Aorta (tissue), 5 donors: ENCODE measurements at regions of chr20 and their contacts with region 1.

Region 1: DNA sequence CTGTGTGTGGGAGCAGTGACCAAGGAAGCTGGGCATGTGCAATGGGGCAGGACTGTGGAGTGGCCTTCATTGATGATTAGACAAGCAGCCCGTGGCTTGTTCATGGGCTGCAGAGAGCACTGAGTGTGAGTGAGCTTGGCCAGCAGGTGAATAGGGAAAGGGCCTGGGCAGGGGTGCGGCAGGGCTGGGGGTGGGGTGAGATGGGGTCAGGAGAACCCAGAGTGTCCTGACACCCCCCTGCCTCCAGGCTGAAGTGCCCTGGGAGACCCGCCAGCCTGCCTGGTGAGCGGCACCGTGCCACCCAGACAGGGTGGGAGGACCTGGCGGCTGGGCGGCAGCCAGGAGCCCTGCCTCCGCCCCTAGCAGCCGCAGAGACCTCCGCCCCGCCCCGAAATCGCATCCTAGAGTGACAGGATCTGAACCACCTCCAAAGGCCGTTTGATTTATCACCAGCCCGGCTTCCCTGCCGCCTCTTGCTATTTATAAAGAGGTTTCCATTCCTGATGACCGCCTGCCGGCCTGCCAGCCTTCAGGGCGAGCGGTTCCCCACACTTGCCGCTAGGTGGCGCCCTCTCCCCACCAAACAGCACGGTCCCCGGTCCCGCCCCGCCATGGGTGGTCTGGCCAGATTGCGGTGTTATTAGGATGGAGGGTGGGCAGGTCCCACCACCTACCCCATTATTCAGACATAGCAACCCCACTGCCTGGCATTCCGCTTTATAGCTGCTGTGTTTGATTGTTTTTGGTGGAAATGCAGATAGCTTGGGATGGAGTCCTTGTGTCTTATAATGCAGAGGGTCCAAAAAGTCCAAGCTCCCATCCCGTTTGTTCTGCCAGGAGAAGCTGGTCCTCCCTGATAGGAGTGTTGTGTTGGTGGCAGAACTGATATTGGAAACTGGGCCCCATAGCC is 3.5 kb downstream of the MYLK2 start:
- DNase-seq: peak; percentile 87 to 96
- ATAC-seq: peak; percentile 93
- H3K4me3 ChIP-seq: no peak overlapping the region
- H3K27ac ChIP-seq: peak overlapping the region in 1 of 2 donors; percentile 62
- H3K4me1 ChIP-seq: no peaks in the 10 kb centered on the region
- H3K27me3 ChIP-seq: no peaks in the 10 kb centered on the region

Region 2: DNA sequence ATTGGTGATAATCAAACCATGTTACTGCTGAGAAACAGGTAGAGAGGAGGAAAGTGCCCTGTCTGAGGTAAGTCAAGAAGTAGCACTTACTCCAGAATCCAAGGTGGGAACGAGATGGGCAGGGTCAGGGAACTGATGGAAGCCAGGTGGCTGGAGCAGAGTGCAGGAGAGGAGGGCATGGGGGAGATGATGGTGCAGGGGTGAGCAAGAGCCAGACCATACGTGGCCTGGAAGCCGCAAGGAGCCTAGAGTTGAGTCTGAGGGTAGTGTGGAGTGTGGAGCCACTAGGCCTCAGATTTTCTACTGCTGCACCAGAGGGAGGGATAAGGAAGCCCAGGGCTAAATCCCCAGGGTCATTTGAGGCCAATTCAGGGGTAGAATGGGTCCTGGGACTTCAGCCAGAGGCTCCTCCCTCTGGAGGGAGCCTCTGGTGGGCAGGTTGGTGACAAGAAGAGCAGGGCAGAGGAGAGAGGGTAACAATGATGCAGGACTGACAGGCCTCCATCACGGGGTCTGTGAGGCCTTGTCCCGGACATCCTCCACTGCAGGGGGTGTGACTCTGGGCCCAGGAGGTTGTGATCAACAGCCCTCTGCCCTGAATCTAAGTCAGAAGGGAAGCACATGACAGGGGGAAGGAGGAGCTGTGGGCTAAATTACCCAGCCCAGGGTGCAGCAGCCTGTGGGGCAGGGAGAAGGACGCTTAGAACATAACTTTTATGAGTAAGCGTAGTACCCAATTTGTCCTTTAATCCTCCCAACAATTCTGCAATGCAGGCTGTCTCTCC is 156.2 kb before region 1 on chr20:
- intact Hi-C with region 1: no loop called
- DNase-seq: peak in 1 of 2 donors; percentile 86
- ATAC-seq: peak; percentile 19
- H3K4me3 ChIP-seq: no peak overlapping the region
- H3K27ac ChIP-seq: peak overlapping the region in 1 of 2 donors; percentile 10
- H3K4me1 ChIP-seq: peaks cover 3 to 10% of the 10 kb centered on the region in 2 donors
- H3K27me3 ChIP-seq: no peaks in the 10 kb centered on the region

Region 3: DNA sequence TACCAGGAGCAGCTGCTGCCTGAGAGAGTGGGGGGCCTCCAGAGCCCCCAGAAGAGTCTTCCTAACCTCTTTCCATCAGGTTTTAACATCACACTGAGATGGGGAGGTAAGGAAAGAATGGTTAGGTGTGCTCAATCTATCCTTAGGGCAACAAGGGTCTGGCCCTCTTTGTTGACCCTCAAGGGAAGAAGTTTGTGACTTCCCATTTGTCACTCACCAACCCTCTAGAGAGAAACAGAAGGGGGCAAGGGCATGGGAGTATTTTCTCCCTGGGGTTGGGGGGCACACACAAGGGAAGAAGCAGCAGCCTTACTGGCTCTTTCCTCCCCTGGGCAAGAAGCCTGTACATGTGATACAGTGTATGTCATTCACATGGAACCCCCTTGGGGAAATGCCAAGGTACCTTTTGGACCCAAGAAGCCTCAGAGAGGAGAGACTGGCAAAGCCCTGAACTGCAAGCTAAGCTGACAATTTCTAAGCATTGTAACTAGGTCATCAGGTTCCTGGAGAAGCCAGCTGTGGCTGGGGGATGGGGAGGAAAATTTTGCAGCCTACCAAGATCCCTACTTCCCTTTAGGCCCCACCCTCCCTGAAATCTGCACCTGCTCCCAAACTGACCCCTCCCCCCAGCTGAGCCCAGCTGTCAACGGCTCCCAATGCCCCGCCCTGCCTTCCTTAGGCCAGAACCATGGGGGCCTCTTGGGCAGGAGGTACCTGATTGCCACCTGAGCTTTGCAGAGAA is 114.5 kb before region 1 on chr20:
- intact Hi-C with region 1: no loop called
- DNase-seq: peak in 1 of 2 donors; percentile 73
- ATAC-seq: no peak
- H3K4me3 ChIP-seq: no peak overlapping the region
- H3K27ac ChIP-seq: peak overlapping the region in 1 of 2 donors; percentile 46
- H3K4me1 ChIP-seq: peaks cover 2 to 25% of the 10 kb centered on the region in 2 donors
- H3K27me3 ChIP-seq: no peaks in the 10 kb centered on the region

Region 4: DNA sequence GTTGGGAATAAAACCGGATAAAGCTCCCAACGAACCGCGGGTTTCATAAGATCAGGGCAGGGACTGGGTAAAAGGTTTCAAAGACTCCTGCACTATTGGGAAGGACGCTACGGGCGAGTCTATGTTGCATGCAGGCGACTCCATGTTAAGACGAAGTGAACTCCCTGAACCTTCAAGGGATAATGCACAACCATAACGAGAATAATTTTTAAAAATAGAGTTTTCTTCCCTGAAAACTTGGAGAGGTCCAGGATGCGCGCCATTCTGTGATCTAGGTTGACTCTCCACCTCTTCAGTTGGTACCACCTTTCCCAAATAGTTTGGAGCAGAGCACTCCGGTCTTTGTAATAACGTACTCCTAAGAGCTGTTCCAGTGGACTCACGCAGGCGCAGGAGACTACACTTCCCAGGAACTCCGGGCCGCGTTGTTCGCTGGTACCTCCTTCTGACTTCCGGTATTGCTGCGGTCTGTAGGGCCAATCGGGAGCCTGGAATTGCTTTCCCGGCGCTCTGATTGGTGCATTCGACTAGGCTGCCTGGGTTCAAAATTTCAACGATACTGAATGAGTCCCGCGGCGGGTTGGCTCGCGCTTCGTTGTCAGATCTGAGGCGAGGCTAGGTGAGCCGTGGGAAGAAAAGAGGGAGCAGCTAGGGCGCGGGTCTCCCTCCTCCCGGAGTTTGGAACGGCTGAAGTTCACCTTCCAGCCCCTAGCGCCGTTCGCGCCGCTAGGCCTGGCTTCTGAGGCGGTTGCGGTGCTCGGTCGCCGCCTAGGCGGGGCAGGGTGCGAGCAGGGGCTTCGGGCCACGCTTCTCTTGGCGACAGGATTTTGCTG is 83.7 kb before region 1 on chr20 and contains the start of gene TPX2:
- intact Hi-C with region 1: loop called (anchors 5 to 10 kb)
- DNase-seq: peak; percentile 96 to 97
- ATAC-seq: peak; percentile 99
- H3K4me3 ChIP-seq: peak within 1 kb of the TSS; percentile 57 to 86
- H3K27ac ChIP-seq: peak within 1 kb of the TSS; percentile 34 to 48
- H3K4me1 ChIP-seq: no peaks in the 10 kb centered on the region
- H3K27me3 ChIP-seq: no peaks in the 10 kb centered on the region
- total RNA-seq, gene TPX2: 0.75 to 2.1 TPM

Region 5: GRCh38 chr20:31788578-31788977 is 34.1 kb before region 1 on chr20:
- intact Hi-C with region 1: no loop called
- DNase-seq: no peak
- ATAC-seq: no peak
- H3K4me3 ChIP-seq: no peak overlapping the region
- H3K27ac ChIP-seq: no peak overlapping the region
- H3K4me1 ChIP-seq: no peaks in the 10 kb centered on the region
- H3K27me3 ChIP-seq: no peaks in the 10 kb centered on the region

Region 6: DNA sequence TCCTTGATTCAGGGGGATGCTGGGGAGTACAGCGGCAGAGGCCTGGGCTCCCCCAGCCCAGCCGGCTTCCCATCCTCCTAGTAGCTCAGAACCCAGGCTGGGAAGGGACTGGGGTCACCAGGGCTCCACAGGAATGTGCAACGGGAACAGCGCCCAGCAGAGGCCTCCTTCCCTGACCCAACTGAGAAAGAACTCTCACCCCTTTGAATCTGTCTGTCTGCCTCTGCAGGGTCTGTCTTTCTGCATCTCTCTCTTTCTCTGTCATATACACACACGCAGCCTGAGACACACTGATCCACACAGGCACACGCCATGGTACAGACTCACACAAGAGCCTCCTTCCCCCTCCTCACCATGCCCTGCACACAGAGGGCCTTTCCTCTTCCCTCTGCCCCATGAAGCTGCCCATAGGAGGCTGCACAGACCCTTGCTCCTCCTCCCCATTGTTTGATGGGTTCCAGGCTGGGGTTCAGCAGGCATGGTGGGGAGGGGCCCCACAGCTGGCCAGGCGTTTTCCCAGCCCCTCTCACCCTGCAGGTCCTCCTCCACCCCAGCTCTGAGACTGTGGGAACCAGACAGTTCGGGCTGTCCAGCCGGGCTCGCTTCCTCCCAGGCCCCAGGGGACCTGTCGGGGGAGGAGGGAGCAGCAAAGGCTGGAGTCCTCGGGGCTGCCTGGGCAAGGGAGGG is 19.9 kb after region 1 on chr20:
- intact Hi-C with region 1: loop called (anchors 2 kb)
- DNase-seq: peak; percentile 88 to 89
- ATAC-seq: peak; percentile 56
- H3K4me3 ChIP-seq: peak overlapping the region in 1 of 2 donors; percentile 21
- H3K27ac ChIP-seq: peak overlapping the region; percentile 71 to 82
- H3K4me1 ChIP-seq: no peaks in the 10 kb centered on the region
- H3K27me3 ChIP-seq: no peaks in the 10 kb centered on the region

Region 7: DNA sequence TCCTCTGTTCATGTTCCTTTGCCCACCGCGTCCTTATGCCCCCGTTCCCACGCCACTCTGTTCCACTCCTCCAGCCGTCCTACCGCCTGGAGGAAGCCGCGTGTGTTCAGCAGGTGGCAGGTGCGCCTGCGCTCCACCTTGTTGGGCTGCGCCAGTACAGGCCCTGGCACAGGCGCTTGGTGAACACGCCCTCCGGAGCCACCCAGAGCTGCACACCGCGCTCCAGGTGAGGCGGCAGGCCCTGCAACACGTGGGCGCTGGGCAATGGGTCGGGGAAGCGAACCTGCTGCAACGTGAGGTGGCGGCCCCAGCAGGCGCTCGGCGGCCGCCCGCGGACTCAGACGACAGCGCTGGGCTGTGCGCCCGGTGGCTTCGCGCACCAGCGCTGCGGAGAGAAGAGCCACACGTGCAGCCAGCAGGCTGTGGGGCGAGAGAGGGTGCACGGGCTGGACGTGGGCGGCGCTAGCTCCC is 26.8 kb after region 1 on chr20:
- intact Hi-C with region 1: loop called (anchors 2 kb)
- DNase-seq: no peak
- ATAC-seq: no peak
- H3K4me3 ChIP-seq: no peak overlapping the region
- H3K27ac ChIP-seq: no peak overlapping the region
- H3K4me1 ChIP-seq: no peaks in the 10 kb centered on the region
- H3K27me3 ChIP-seq: no peaks in the 10 kb centered on the region

Region 8: DNA sequence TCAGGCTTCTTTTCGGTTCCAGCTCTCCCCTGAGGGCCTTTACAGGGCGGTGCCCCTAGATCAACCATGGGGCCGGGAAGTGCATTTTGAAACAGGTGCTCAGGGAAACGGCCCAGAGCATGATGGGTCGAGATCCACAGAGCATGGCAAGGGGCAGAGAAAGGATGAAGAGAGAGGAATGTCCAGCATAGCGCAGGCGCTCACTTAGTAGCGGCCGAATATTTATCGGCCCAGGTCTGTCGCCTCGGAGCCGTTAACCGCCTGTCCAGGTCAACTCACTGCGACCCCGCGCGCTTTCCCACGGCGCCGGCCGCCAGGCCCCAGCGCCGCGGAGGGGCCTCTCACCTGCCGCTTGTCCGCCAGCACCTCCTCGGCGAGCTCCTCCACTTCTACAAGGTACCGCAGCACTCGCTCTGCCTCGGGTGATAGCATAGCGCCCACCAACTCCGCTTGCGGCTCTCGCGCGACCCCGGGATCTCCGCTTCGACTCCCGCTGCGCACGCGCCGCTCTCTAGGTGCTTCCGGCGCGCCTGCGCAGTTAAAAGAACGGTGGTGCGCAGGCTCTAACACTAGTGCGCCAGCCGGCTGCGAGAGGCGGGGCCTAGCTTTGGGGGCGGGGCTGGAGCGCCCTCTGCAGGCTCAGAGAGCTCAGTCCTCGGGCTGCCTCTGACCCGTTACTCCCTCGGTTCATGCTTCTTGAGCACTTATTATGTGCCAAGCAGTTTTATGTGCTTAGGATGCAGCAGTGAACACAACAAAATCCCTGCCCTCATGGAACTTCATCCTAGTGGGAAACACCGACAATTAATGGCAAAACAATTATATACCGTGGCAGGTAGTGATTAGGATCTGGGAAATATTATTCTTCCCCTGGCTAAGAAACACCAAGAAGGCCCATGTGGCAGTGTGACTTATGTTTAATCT is 129.1 kb after region 1 on chr20 and contains the start of gene PDRG1:
- intact Hi-C with region 1: loop called (anchors 2 kb)
- DNase-seq: peak; percentile 96 to 99
- ATAC-seq: peak; percentile 99
- H3K4me3 ChIP-seq: peak within 1 kb of the TSS; percentile 61 to 82
- H3K27ac ChIP-seq: peak within 1 kb of the TSS in 1 of 2 donors; percentile 19
- H3K4me1 ChIP-seq: no peaks in the 10 kb centered on the region
- H3K27me3 ChIP-seq: no peaks in the 10 kb centered on the region
- total RNA-seq, gene PDRG1: 5.6 to 8.6 TPM

Region 9: DNA sequence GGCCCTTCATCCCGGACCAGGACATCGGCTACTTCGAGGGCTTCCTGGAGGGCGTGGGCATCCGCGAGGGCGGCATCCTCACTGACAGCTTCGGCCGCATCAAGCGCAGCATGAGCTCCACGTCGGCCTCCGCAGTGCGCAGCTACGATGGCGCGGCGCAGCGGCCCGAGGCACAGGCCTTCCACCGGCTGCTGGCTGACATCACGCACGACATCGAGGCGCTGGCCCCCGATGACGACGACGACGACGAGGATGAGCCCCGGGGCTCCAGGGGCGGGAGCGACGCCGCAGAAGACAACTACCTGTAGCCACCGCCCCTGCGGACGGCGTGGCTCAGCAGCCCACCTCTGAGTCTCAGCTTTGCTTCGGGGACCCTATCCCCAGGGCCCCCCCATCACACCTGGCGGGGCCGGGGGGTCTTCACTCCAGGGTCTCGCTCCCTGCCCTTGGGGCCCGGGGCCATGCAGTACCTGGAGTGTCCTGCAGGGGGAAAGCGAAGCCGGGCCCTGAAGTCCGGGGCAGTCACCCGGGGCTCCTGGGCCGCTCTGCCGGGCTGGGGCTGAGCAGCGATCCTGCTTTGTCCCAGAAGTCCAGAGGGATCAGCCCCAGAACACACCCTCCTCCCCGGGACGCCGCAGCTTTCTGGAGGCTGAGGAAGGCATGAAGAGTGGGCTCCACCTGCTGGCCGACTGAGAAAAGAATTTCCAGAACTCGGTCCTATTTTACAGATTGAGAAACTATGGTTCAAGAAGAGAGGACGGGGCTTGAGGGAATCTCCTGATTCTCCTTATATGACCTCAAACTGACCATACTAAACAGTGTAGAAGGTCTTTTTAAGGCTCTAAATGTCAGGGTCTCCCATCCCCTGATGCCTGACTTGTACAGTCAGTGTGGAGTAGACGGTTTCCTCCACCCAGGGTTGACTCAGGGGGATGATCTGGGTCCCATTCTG is 208.6 kb after region 1 on chr20:
- intact Hi-C with region 1: loop called (anchors 1 to 5 kb)
- DNase-seq: peak; percentile 86 to 93
- ATAC-seq: peak; percentile 85
- H3K4me3 ChIP-seq: no peak overlapping the region
- H3K27ac ChIP-seq: no peak overlapping the region
- H3K4me1 ChIP-seq: no peaks in the 10 kb centered on the region
- H3K27me3 ChIP-seq: no peaks in the 10 kb centered on the region

Region 10: DNA sequence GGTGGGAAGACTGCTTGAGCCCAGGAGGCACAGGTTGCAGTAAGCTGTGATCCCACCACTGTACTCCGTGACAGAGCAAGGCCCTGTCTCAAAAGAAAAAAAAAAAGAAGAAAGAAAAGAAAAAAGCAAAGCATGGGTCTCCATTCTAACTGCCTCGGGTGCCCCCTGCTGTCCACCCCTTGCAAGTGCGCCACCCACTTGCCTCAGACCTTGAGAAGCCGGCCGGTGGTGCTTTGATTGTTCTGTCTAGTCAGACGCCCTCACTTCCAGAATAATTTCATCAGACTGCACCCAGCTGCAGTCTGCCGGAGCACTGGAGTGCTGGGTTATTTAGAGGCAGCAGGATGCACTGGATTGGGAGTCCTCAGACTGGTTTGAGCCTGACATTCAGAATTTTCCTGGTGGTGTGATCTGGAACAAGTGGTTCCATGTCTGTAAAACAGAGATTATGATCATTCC is 269.2 kb after region 1 on chr20:
- intact Hi-C with region 1: loop called in 1 of 2 experiments (anchors 5 kb)
- DNase-seq: peak; percentile 84 to 91
- ATAC-seq: peak; percentile 70
- H3K4me3 ChIP-seq: no peak overlapping the region
- H3K27ac ChIP-seq: no peak overlapping the region
- H3K4me1 ChIP-seq: no peaks in the 10 kb centered on the region
- H3K27me3 ChIP-seq: no peaks in the 10 kb centered on the region